H1 (cell line): ENCODE measurements at regions of chr22 and their contacts with region 1.

Region 1: DNA sequence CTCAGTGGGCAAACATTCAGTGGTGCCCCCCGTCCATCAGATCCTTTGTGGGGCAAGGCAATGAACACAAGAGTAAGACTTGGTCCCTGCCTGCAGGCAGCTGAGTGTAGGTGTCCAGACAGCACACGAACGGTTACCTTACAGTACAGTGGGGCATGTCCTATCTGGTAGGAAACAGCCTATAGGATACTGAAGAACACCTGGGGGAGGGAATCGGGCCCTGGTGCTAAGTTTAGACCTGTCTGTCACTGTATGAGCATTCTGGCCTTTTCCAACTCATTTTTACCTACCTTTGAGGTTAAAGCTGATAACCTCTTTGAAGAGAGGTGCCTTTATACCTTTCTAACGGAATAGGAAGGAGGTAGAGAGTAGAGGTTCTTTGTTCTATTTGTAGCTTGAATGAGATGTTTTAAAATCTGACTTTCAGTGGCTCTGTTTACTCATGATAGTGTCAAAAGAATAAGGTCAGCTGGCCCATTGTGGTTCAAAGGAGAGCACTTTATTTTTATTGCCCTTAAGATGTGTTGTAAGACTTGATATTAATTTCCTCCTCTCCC is 8.9 kb downstream of the ZNRF3 start:
- DNase-seq: no peak
- H3K4me3 ChIP-seq: no peak overlapping the region
- H3K27ac ChIP-seq: 0 out of 2 replicates have a peak overlapping the region, but pooled peaks have one; percentile 2
- H3K4me1 ChIP-seq: peaks cover 11 to 19% (median 18%) of the 10 kb centered on the region in 4 experiments
- H3K27me3 ChIP-seq: no peaks in the 10 kb centered on the region
- CTCF ChIP-seq: no peak
- EP300 ChIP-seq: no peak
- POLR2A ChIP-seq: no peak
- RAD21 ChIP-seq: no peak

Region 2: GRCh38 chr22:28909375-28909774 is 17.1 kb after region 1 on chr22:
- CTCF ChIA-PET with region 1: interaction called, 7 read pairs
- POLR2A ChIA-PET with region 1: interaction called, 10 read pairs
- DNase-seq: no peak
- H3K4me3 ChIP-seq: no peak overlapping the region
- H3K27ac ChIP-seq: no peak overlapping the region
- H3K4me1 ChIP-seq: peaks cover 0 to 9% (median 0%) of the 10 kb centered on the region in 4 experiments; a peak in 2 of 7 replicates
- H3K27me3 ChIP-seq: no peaks in the 10 kb centered on the region
- CTCF ChIP-seq: no peak
- EP300 ChIP-seq: no peak
- POLR2A ChIP-seq: no peak
- RAD21 ChIP-seq: no peak